ENCODE measurements at regions of chr1 and their contacts with region 1.

Region 1: DNA sequence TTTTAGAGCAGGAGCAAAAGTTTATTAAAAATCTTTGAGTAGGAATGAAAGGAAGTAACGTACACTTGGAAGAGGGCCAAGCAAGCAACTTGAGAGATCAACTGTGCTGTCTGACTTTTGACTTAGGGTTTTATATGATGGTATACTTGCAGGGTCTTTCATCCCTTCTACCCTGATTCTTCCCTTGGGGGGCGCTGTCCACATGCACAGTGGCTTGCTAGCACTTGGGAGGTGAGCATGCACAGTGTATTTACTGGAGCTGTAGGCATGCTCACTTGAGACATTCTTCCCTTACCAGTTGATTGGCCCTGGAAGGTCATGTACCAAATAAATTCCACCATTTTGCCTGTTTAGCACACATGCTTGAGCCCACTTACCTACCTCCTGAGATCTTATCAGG is 1001.3 kb upstream of the ADGRL2 start:
- DNase-seq: no peak
- H3K4me3 ChIP-seq: no peak overlapping the region
- H3K27ac ChIP-seq: no peak overlapping the region
- H3K4me1 ChIP-seq: no peaks in the 10 kb centered on the region
- H3K27me3 ChIP-seq: no peaks in the 10 kb centered on the region
- CTCF ChIP-seq: no peak
- POLR2A ChIP-seq: no peak

Region 2: DNA sequence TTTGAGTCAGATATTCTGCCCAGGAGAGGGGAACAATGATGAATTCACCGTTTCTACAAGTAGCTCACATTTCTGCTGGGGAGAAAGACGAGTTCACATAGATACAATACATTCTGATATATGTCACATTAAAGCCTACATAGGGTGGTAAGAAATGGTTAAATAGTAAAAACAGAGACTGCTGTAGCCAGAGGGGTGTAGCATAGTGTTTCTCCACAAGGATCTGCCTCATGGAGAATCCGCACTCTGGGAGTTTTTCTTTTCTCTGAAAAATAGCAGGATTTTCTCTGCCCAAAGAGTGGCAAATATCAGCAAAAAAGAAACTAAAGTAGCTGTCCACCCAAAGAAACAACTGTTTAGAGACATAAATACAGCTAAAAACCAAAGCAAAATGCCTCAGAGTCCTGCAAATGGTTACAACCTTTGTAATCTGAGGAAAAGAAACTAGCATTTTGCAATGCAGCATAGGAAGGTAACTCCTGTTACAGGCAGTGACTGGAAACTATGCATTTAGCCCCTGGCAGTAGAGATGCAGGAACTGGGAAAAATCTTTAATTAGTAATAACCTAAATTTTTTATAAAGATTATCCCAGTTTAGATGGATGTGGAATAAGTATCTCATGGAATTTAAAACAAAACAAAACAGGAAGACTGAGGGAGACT is 125.4 kb before region 1 on chr1:
- intact Hi-C with region 1: loop called (anchors 5 kb)
- DNase-seq: no peak
- H3K4me3 ChIP-seq: no peak overlapping the region
- H3K27ac ChIP-seq: no peak overlapping the region
- H3K4me1 ChIP-seq: no peaks in the 10 kb centered on the region
- H3K27me3 ChIP-seq: no peaks in the 10 kb centered on the region
- CTCF ChIP-seq: no peak
- POLR2A ChIP-seq: no peak

Region 3: GRCh38 chr1:81021134-81021533 is 221.7 kb after region 1 on chr1:
- intact Hi-C with region 1: no loop called
- DNase-seq: no peak
- H3K4me3 ChIP-seq: no peak overlapping the region
- H3K27ac ChIP-seq: no peak overlapping the region
- H3K4me1 ChIP-seq: no peaks in the 10 kb centered on the region
- H3K27me3 ChIP-seq: no peaks in the 10 kb centered on the region
- CTCF ChIP-seq: no peak
- POLR2A ChIP-seq: no peak